Activated naive CD4-positive, alpha-beta T cell treated with anti-CD3 and anti-CD28 coated beads, Interleukin-2, amount 10 ng/mL, durations not matched to agents 7 days and 5 days (primary cell): ENCODE measurements at regions of chr17 and their contacts with region 1.

Region 1: GRCh38 chr17:48492401-48493298 is 38.2 kb downstream of the HOXB1 start:
- DNase-seq: peak; percentile 79
- H3K4me3 Mint-ChIP-seq: peak overlapping the region; percentile 46
- H3K27ac Mint-ChIP-seq: no peak overlapping the region
- H3K4me1 Mint-ChIP-seq: peaks cover 48% of the 10 kb centered on the region
- H3K27me3 Mint-ChIP-seq: peaks cover 63% of the 10 kb centered on the region

Region 2: DNA sequence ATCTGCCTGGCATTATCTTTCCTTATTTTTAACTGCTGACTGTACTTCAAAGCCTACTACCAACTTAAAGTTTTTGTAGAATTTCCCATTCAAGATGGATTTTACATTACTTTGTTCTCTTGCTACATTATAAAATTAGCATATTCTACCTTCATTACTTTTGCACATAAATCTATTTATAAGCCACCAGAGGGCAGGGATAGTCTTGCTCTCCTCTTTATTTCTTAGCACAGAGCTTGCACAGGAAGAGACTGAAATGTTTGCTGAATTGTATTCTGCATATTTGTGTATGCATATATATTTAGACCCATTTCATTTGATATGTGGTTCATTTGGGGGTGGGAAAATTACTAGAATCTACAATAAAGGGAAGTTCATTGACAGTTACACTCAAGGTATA is 170.6 kb before region 1 on chr17:
- CTCF ChIA-PET with region 1: no interaction called
- DNase-seq: no peak
- H3K4me3 Mint-ChIP-seq: no peak overlapping the region
- H3K27ac Mint-ChIP-seq: no peak overlapping the region
- H3K4me1 Mint-ChIP-seq: no peaks in the 10 kb centered on the region
- H3K27me3 Mint-ChIP-seq: no peaks in the 10 kb centered on the region

Region 3: DNA sequence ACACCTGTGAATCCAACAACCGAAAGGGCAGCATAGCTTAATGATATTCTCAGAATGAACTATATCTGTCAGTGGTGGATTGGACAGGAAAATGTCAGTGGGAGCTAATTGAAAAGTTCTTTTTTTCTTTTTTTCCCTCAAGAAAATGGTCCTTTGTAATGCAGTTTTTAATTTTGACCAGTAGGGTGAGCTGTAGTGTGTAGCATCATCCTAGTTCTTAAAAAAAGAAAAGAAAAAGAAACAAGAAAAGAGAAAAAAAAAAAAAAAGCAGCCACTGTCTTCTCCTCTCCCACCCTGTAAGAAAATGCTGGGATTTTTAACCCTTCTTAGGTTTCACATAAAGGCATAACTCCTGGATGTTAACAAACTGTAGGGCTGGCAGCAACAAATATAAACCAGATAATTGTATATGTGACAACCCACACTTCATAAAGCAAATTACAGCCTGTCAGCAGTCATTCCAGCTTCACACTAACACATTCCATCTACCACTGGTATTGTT is 140.8 kb before region 1 on chr17:
- CTCF ChIA-PET with region 1: interaction called, 12 read pairs
- DNase-seq: no peak
- H3K4me3 Mint-ChIP-seq: no peak overlapping the region
- H3K27ac Mint-ChIP-seq: no peak overlapping the region
- H3K4me1 Mint-ChIP-seq: peaks cover 6% of the 10 kb centered on the region
- H3K27me3 Mint-ChIP-seq: no peaks in the 10 kb centered on the region

Region 4: DNA sequence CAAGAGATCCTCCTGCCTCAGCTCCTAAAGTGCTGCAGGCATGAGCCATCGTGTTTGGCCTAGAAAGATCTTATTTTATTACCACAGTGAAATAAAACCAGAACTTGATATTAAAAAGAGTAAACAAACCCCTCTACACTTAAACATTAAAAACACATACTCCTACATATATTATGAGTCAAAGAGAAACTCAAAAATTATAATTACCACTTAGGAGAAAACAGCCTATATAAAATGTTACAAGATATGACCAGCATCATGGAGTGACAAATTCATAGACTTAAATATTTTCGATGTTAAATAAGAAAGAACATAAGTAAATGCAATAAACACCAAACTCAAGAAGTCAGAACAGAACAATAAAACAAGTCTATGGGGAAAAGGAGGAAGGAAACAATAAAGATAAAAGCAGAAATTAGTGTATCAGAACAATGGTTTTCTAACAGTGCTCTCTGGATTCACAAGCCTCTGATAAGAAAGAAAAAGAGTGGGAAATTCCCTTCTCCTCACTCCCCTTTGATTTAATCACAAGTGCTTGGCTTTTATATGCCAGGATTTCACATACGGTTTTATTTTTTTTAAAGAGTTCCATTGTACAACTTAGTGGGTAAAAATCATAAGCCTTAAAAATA is 85.6 kb before region 1 on chr17:
- CTCF ChIA-PET with region 1: no interaction called
- DNase-seq: no peak
- H3K4me3 Mint-ChIP-seq: no peak overlapping the region
- H3K27ac Mint-ChIP-seq: no peak overlapping the region
- H3K4me1 Mint-ChIP-seq: peaks cover 38% of the 10 kb centered on the region
- H3K27me3 Mint-ChIP-seq: no peaks in the 10 kb centered on the region

Region 5: GRCh38 chr17:48541577-48542113 is 49.0 kb after region 1 on chr17:
- CTCF ChIA-PET with region 1: interaction called, 13 read pairs
- DNase-seq: peak; percentile 59
- H3K4me3 Mint-ChIP-seq: peak overlapping the region; percentile 100
- H3K27ac Mint-ChIP-seq: peak overlapping the region; percentile 94
- H3K4me1 Mint-ChIP-seq: peaks cover 50% of the 10 kb centered on the region
- H3K27me3 Mint-ChIP-seq: peaks cover 75% of the 10 kb centered on the region

Region 6: GRCh38 chr17:48547808-48548522 is 55.3 kb after region 1 on chr17:
- CTCF ChIA-PET with region 1: interaction called, 11 read pairs
- DNase-seq: peak; percentile 71
- H3K4me3 Mint-ChIP-seq: peak overlapping the region; percentile 100
- H3K27ac Mint-ChIP-seq: peak overlapping the region; percentile 90
- H3K4me1 Mint-ChIP-seq: peaks cover 51% of the 10 kb centered on the region
- H3K27me3 Mint-ChIP-seq: peaks cover 64% of the 10 kb centered on the region

Region 7: DNA sequence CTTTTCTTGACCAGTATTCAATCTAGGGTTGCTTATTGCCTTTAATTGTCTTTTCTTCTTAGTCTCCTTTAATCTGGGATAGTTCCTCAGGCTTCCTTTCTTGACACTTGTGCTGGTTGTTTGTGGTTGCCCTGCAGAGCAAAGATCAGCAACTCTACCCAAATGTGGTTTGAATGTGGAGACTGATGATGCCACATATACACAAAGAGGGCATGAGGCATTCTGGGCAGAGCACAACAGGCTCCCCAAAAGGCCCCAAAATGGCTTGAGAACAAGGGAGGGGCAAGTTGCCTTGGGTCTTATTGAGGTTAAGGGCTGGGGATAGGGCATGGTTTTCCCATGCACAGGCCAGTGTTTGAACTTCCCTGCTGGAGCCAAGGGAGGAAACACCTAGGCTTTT is 163.3 kb after region 1 on chr17:
- CTCF ChIA-PET with region 1: no interaction called
- DNase-seq: no peak
- H3K4me3 Mint-ChIP-seq: no peak overlapping the region
- H3K27ac Mint-ChIP-seq: no peak overlapping the region
- H3K4me1 Mint-ChIP-seq: peaks cover 2% of the 10 kb centered on the region
- H3K27me3 Mint-ChIP-seq: peaks cover 52% of the 10 kb centered on the region

Region 8: DNA sequence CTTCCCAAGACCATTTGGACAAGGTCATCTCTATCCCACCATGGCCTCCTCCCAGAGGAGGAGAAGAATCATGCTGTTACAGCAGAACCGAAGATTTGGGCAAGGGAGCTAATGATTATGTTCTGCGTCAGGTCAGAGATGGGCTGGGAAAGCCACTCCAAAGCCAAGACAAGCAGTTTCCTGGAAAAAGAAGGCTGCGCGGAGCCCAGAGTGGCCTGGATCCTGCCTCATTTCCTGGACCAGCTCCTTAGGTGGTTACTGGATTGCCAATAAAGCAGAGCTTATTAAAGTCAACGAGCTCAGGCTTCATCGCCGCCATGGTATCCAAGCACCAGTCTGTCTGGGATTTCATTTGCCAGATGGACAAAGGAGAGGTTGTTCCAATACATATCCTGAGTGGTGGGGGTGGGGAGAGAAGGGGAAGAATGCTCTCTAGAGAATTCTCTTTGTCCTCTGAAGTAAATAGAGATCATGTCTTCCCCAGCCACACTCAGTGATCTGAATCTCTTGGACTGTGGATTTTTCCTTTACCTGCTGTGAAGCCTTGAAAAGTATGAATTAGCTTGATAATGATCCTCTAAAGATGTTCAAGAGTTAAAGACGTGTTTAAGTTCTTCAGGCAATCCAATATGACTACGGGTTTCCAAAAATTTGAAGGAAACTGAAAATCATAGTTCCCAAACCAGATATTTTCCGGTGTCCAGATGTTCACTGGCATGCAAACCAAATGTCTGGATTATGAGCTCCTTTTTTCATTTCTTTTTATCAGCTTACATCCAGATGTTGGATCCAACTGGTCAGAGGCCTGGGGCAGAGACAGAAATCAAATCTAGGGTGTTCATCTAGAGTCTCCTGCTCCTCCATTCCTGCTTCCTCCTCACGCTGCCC is 212.0 kb after region 1 on chr17:
- CTCF ChIA-PET with region 1: no interaction called
- DNase-seq: no peak
- H3K4me3 Mint-ChIP-seq: no peak overlapping the region
- H3K27ac Mint-ChIP-seq: no peak overlapping the region
- H3K4me1 Mint-ChIP-seq: no peaks in the 10 kb centered on the region
- H3K27me3 Mint-ChIP-seq: peaks cover 86% of the 10 kb centered on the region